ENCODE measurements at regions of chr4 and their contacts with region 1.

Region 1: GRCh38 chr4:164009435-164009834 is 514.9 kb downstream of the TMA16 start:
- DNase-seq: no peak

Region 2: DNA sequence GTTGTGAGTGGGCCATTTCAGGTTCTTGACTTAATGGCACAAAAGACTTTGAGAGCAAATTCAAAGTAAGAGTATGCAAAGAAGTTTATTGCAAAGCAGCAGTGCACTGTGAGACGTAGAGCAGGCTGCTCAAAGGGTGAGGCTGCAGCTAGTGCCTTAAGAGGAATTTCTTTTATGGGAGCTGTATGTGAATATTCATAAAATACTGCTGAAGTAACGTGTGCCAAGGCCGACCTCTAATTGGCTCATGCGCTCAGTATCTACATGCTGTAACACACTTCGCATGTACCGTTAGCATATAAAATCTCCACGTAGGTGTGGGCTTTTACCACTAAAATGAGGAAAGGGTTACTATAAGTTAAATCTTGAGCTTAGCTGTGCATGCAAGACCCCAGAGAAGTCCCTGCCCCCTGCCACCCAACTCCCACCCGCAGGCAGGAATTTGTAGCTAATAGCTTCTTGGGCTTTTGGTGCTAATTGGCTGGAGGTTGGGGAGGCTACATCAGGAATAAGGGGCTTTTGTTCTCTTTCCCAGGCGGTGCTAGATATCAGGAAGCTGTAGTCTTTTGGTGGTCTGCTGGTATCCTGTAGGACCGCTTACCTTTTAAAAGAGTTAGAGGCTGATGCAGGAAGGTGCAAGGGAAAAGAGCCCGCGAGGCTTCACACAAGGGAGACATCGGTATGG is 1893.2 kb before region 1 on chr4:
- intact Hi-C with region 1: loop called in 1 of 2 experiments (anchors 10 kb)
- DNase-seq: no peak

Region 3: GRCh38 chr4:163790231-163790630 is 219.2 kb before region 1 on chr4:
- intact Hi-C with region 1: no loop called
- DNase-seq: no peak

Region 4: GRCh38 chr4:164039482-164039881 is 30.0 kb after region 1 on chr4:
- intact Hi-C with region 1: no loop called
- DNase-seq: no peak

Region 5: GRCh38 chr4:164304101-164304639 is 294.7 kb after region 1 on chr4:
- intact Hi-C with region 1: no loop called
- DNase-seq: no peak